Activated naive CD4-positive, alpha-beta T cell treated with anti-CD3 and anti-CD28 coated beads for 36 hours (primary cell): ENCODE measurements at regions of chr1 and their contacts with region 1.

Region 1: GRCh38 chr1:197659171-197659570 is 116.1 kb downstream of the DENND1B start:
- DNase-seq: no peak
- H3K4me3 Mint-ChIP-seq: no peak overlapping the region
- H3K27ac Mint-ChIP-seq: no peak overlapping the region
- H3K4me1 Mint-ChIP-seq: peaks cover 5% of the 10 kb centered on the region
- H3K27me3 Mint-ChIP-seq: no peaks in the 10 kb centered on the region

Region 2: DNA sequence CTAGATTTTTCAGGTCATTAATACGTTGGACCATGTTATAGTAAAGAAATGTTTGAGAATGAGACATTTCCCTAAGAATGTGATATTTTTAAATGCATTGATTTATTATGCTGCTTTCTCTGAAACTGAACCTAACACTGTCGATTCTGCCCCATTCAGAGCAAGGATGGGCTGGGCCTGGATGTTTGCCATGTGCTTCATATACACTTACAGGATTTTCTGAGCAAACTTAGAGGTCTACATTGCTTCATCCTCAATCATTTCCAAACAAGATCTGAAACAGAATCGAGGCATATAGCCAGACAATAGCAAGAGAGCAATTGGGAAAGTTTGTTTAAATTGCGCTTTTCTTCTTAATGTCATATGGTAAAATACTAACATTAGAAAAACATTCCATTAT is 207.7 kb before region 1 on chr1:
- CTCF ChIA-PET with region 1: no interaction called
- intact Hi-C with region 1: no loop called
- DNase-seq: no peak
- H3K4me3 Mint-ChIP-seq: no peak overlapping the region
- H3K27ac Mint-ChIP-seq: no peak overlapping the region
- H3K4me1 Mint-ChIP-seq: no peaks in the 10 kb centered on the region
- H3K27me3 Mint-ChIP-seq: no peaks in the 10 kb centered on the region

Region 3: GRCh38 chr1:197731446-197731845 is 72.3 kb after region 1 on chr1:
- CTCF ChIA-PET with region 1: no interaction called
- intact Hi-C with region 1: loop called (anchors 2 kb)
- DNase-seq: no peak
- H3K4me3 Mint-ChIP-seq: no peak overlapping the region
- H3K27ac Mint-ChIP-seq: no peak overlapping the region
- H3K4me1 Mint-ChIP-seq: peaks cover 2% of the 10 kb centered on the region
- H3K27me3 Mint-ChIP-seq: no peaks in the 10 kb centered on the region